MCF 10A (cell line): ENCODE measurements at regions of chr12 and their contacts with region 1.

Region 1: GRCh38 chr12:57058454-57058853 is 8.5 kb upstream of the MYO1A start:
- DNase-seq: no peak
- H3K4me3 Mint-ChIP-seq: no peak overlapping the region
- H3K27ac Mint-ChIP-seq: no peak overlapping the region
- H3K4me1 Mint-ChIP-seq: no peaks in the 10 kb centered on the region
- H3K27me3 Mint-ChIP-seq: no peaks in the 10 kb centered on the region
- CTCF ChIP-seq: no peak

Region 2: GRCh38 chr12:56833776-56834175 is 224.7 kb before region 1 on chr12:
- CTCF ChIA-PET with region 1: no interaction called
- POLR2A ChIA-PET with region 1: no interaction called
- intact Hi-C with region 1: no loop called
- DNase-seq: no peak
- H3K4me3 Mint-ChIP-seq: no peak overlapping the region
- H3K27ac Mint-ChIP-seq: no peak overlapping the region
- H3K4me1 Mint-ChIP-seq: peaks cover 20% of the 10 kb centered on the region
- H3K27me3 Mint-ChIP-seq: no peaks in the 10 kb centered on the region
- CTCF ChIP-seq: no peak

Region 3: GRCh38 chr12:56897844-56898361 is 160.6 kb before region 1 on chr12:
- CTCF ChIA-PET with region 1: no interaction called
- POLR2A ChIA-PET with region 1: no interaction called
- intact Hi-C with region 1: no loop called
- DNase-seq: peak; percentile 93
- H3K4me3 Mint-ChIP-seq: no peak overlapping the region
- H3K27ac Mint-ChIP-seq: peak overlapping the region; percentile 55
- H3K4me1 Mint-ChIP-seq: peaks cover 43% of the 10 kb centered on the region
- H3K27me3 Mint-ChIP-seq: no peaks in the 10 kb centered on the region
- CTCF ChIP-seq: no peak

Region 4: DNA sequence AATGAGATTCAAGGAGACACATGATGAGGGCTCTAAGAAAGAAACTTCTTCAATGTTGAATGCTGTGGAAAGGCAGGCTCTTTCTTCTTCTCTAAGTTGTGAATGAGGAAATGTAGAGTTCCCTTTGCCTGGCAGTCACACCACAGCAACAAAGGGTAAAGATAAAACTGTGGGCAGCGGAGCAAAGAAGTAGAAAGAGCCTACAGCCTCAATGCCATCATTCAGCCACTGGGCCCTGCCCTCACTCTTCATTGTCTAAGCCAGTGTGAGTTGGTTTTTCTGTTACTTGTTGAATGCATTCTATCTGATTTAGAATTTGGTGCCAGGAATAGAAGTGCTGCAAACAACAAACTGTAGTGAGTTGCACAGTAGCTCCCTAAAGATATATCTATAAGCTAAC is 136.4 kb before region 1 on chr12:
- CTCF ChIA-PET with region 1: no interaction called
- POLR2A ChIA-PET with region 1: no interaction called
- intact Hi-C with region 1: no loop called
- DNase-seq: no peak
- H3K4me3 Mint-ChIP-seq: no peak overlapping the region
- H3K27ac Mint-ChIP-seq: no peak overlapping the region
- H3K4me1 Mint-ChIP-seq: no peaks in the 10 kb centered on the region
- H3K27me3 Mint-ChIP-seq: no peaks in the 10 kb centered on the region
- CTCF ChIP-seq: no peak

Region 5: DNA sequence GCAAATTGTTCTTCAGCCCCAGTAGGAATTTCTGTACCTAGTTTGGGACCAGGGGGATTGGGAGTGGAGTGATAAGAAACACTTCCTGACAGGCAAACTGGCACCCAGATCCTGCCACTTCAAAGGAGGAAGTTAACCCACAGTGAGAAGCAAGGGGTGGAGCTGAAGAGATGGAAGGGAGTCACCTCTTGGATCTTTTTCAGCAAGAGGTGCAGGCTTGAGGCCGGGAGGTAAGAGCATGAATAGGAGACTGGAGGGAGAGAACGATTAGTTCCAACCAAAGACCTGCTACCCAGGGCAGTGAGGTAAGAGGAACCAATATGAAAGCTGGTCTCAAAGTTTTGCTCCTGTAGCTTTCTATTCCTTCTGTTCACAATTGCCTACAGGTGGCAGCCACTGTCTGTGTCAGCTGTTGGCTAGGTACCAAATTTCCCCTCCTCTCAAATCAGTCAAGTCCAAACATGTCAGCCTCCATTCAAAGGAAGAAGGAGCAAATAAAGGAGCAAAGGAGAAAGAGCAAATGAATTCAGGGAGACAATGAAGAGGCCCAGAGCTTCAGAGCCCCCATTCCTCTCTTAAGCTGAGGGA is 27.2 kb before region 1 on chr12:
- CTCF ChIA-PET with region 1: interaction called, 71 read pairs
- POLR2A ChIA-PET with region 1: interaction called, 21 read pairs
- intact Hi-C with region 1: no loop called
- DNase-seq: peak; percentile 81
- H3K4me3 Mint-ChIP-seq: peak overlapping the region; percentile 41
- H3K27ac Mint-ChIP-seq: peak overlapping the region; percentile 76
- H3K4me1 Mint-ChIP-seq: peaks cover 30% of the 10 kb centered on the region
- H3K27me3 Mint-ChIP-seq: peaks cover 21% of the 10 kb centered on the region
- CTCF ChIP-seq: no peak

Region 6: GRCh38 chr12:57046947-57047890 is 11.2 kb before region 1 on chr12:
- CTCF ChIA-PET with region 1: interaction called, 82 read pairs
- POLR2A ChIA-PET with region 1: no interaction called
- intact Hi-C with region 1: no loop called
- DNase-seq: no peak
- H3K4me3 Mint-ChIP-seq: no peak overlapping the region
- H3K27ac Mint-ChIP-seq: no peak overlapping the region
- H3K4me1 Mint-ChIP-seq: no peaks in the 10 kb centered on the region
- H3K27me3 Mint-ChIP-seq: peaks cover 28% of the 10 kb centered on the region
- CTCF ChIP-seq: no peak

Region 7: GRCh38 chr12:57272337-57273151 is 214.1 kb after region 1 on chr12:
- CTCF ChIA-PET with region 1: no interaction called
- POLR2A ChIA-PET with region 1: no interaction called
- intact Hi-C with region 1: no loop called
- DNase-seq: no peak
- H3K4me3 Mint-ChIP-seq: no peak overlapping the region
- H3K27ac Mint-ChIP-seq: no peak overlapping the region
- H3K4me1 Mint-ChIP-seq: no peaks in the 10 kb centered on the region
- H3K27me3 Mint-ChIP-seq: no peaks in the 10 kb centered on the region
- CTCF ChIP-seq: no peak